ENCODE measurements at regions of chr14 and their contacts with region 1.

Region 1: DNA sequence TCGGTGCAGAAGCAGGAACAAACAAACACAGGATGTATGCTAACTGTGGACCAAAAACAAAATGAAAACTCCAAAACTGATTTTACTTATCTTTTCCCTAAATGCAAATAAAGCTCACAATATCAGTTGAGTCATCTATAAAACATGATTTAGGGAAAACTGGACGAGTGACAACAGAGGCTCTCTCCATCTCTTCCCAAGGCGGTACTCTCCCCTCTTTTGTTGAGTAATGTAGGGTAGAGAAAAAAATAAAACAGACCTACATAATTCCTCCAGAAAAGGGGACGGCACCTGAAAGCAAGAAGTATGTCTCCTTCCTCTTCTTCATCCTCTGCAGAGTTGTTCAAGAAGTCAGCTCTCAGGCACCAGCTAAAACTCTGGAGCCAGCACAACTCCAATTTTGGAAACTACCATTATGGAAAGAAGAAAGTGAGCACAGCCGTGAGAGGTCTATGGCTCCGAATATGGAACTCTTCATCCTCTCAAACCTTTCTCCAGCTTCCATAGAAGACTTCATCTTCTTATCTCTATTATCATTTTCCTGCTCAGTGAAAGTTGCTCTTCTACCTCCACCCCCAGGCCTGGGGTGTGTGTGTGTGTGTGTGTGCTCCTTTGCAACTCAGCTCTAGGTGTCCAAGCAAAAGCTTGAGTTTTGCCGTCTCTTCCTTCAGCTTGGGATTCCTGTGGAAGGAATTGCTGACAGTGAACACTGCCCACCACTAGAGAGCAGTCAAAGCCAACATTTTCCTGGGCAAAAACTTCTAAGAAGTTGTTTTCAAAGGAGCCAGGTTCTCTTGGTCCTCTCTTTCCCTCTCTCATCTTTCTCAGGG is 155.4 kb downstream of the DIO2 start:
- DNase-seq: peak; percentile 47
- H3K4me3 ChIP-seq: no peak overlapping the region
- H3K27ac ChIP-seq: no peak overlapping the region
- H3K4me1 ChIP-seq: no peaks in the 10 kb centered on the region
- H3K27me3 ChIP-seq: no peaks in the 10 kb centered on the region
- CTCF ChIP-seq: peak; percentile 46 to 61
- POLR2A ChIP-seq: no peak

Region 2: GRCh38 chr14:79947440-79948054 is 108.3 kb before region 1 on chr14:
- CTCF ChIA-PET with region 1: no interaction called
- POLR2A ChIA-PET with region 1: no interaction called
- dilution Hi-C with region 1: no loop called
- intact Hi-C with region 1: no loop called
- DNase-seq: no peak
- H3K4me3 ChIP-seq: no peak overlapping the region
- H3K27ac ChIP-seq: no peak overlapping the region
- H3K4me1 ChIP-seq: no peaks in the 10 kb centered on the region
- H3K27me3 ChIP-seq: no peaks in the 10 kb centered on the region
- CTCF ChIP-seq: no peak
- POLR2A ChIP-seq: no peak

Region 3: DNA sequence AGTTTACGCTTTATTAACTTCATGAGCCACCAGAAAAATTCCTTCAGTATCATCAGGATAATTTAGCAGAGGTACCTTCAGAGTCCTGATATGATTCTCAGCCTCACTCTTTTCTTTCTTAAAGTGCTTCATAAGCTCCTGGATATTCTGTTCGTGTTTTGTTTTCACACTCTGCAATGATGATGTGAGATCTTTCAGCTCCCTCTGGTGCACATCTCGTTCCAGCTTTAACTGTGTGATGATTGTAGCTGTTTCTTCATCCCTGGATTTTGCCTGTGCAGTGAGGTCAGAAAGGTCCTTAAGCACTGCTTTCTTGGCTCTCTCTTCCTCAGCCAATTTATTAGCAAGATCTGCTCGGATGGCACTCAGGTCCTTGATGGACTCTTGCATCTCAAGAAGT is 728.9 kb after region 1 on chr14:
- CTCF ChIA-PET with region 1: interaction called, 10 read pairs
- POLR2A ChIA-PET with region 1: no interaction called
- dilution Hi-C with region 1: no loop called
- intact Hi-C with region 1: no loop called
- DNase-seq: no peak
- H3K4me3 ChIP-seq: no peak overlapping the region
- H3K27ac ChIP-seq: no peak overlapping the region
- H3K4me1 ChIP-seq: no peaks in the 10 kb centered on the region
- H3K27me3 ChIP-seq: no peaks in the 10 kb centered on the region
- CTCF ChIP-seq: no peak
- POLR2A ChIP-seq: no peak

Region 4: DNA sequence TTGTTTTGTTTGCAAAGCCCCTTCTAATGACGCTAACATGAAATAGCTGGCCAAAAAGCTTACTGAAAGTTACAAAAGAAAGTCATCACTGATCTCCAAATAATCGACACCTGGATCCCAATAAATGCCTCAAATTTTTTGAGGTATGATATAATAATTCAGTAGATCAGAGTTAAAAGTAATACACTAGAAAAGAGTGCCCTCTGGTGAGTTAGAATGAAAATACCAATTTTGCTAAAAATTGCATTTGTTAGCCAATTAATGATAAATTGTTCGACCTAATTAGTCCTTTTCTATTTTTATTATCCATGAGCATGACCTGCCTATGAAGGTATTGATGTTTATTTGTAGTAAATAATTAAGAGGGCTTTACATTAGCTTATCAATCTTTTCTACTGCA is 807.1 kb after region 1 on chr14:
- CTCF ChIA-PET with region 1: interaction called, 76 read pairs
- POLR2A ChIA-PET with region 1: no interaction called
- dilution Hi-C with region 1: no loop called
- intact Hi-C with region 1: no loop called
- DNase-seq: peak; percentile 12
- H3K4me3 ChIP-seq: no peak overlapping the region
- H3K27ac ChIP-seq: no peak overlapping the region
- H3K4me1 ChIP-seq: no peaks in the 10 kb centered on the region
- H3K27me3 ChIP-seq: no peaks in the 10 kb centered on the region
- CTCF ChIP-seq: peak in 1 of 2 donors; percentile 5
- POLR2A ChIP-seq: no peak